Activated T-helper 2 cell treated with anti-CD3 and anti-CD28 coated beads, Interferon-gamma antibody, Interleukin-2, Interleukin-4, amounts not matched to agents 10 μg/mL and 5 μg/mL and 100 μg/mL, durations not matched to agents 14 hours and 24 hours and 36 hours (primary cell): ENCODE measurements at regions of chr3 and their contacts with region 1.

Region 1: GRCh38 chr3:142981108-142981507 is 17.6 kb upstream of the PAQR9 start:
- DNase-seq: no peak
- H3K4me3 Mint-ChIP-seq: no peak overlapping the region
- H3K27ac Mint-ChIP-seq: no peak overlapping the region
- H3K4me1 Mint-ChIP-seq: peaks cover 2% of the 10 kb centered on the region
- H3K27me3 Mint-ChIP-seq: peaks cover 38% of the 10 kb centered on the region

Region 2: GRCh38 chr3:142844339-142844977 is 136.7 kb before region 1 on chr3:
- intact Hi-C with region 1: loop called (anchors 5 kb)
- DNase-seq: no peak
- H3K4me3 Mint-ChIP-seq: no peak overlapping the region
- H3K27ac Mint-ChIP-seq: no peak overlapping the region
- H3K4me1 Mint-ChIP-seq: no peaks in the 10 kb centered on the region
- H3K27me3 Mint-ChIP-seq: peaks cover 10% of the 10 kb centered on the region

Region 3: GRCh38 chr3:142866841-142867631 is 114.1 kb before region 1 on chr3:
- intact Hi-C with region 1: no loop called
- DNase-seq: no peak
- H3K4me3 Mint-ChIP-seq: no peak overlapping the region
- H3K27ac Mint-ChIP-seq: no peak overlapping the region
- H3K4me1 Mint-ChIP-seq: peaks cover 10% of the 10 kb centered on the region
- H3K27me3 Mint-ChIP-seq: peaks cover 12% of the 10 kb centered on the region

Region 4: DNA sequence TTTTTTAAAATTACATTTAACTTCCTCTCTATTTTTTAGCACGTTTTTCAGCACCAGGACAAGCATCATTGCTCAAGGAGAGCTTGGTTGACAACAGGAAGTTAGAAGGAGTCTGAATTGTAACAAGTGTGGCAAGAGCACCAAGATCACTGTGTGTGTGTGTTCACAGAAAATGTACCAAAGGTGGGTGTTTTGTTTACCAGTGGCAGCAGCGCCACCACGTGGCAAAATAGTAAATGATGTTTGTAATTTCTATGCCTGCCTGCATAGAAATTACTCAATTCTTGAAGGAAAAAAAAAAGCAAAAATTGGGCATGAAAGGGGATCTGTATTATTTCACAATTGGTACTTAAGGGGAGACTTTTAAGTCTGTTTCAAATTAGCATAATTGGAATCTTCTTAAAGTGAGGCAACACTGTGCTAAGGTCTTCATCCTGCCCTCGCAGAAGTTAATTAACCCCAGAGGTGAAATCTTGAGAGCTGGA is 12.9 kb after region 1 on chr3:
- intact Hi-C with region 1: no loop called
- DNase-seq: peak; percentile 37
- H3K4me3 Mint-ChIP-seq: no peak overlapping the region
- H3K27ac Mint-ChIP-seq: no peak overlapping the region
- H3K4me1 Mint-ChIP-seq: peaks cover 6% of the 10 kb centered on the region
- H3K27me3 Mint-ChIP-seq: peaks cover 20% of the 10 kb centered on the region

Region 5: DNA sequence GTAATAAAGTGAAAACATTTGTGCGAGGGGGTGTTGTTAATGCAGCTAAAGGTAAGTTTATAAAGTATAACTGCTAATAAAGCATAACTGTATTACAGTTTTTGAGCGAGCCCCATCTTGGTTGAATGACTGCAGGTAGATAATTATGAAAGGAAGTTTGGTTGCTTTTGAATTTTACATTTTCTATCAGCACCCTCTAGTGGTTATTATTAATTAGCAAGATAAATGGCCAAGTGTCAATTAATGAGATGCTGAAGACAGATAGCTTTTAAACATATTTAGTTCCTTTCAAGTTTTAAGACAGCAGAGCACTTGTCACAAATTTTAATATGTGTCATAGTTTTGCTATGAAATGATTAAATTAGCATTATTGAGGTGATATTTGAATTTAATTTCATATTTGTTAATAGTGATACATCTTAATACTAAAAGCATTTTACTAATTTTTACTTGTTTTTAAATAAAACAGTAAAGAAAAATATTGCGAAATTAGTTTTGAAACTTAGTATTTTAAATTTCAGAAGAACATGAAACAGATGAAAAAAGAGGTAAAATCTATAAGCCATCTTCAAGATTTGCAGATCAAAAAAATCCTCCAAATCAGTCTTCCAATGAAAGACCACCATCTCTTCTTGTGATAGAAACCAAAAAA is 35.3 kb after region 1 on chr3:
- intact Hi-C with region 1: no loop called
- DNase-seq: no peak
- H3K4me3 Mint-ChIP-seq: no peak overlapping the region
- H3K27ac Mint-ChIP-seq: no peak overlapping the region
- H3K4me1 Mint-ChIP-seq: peaks cover 22% of the 10 kb centered on the region
- H3K27me3 Mint-ChIP-seq: no peaks in the 10 kb centered on the region

Region 6: GRCh38 chr3:143236226-143236964 is 255.3 kb after region 1 on chr3:
- intact Hi-C with region 1: no loop called
- DNase-seq: no peak
- H3K4me3 Mint-ChIP-seq: no peak overlapping the region
- H3K27ac Mint-ChIP-seq: no peak overlapping the region
- H3K4me1 Mint-ChIP-seq: peaks cover 2% of the 10 kb centered on the region
- H3K27me3 Mint-ChIP-seq: no peaks in the 10 kb centered on the region